ENCODE measurements at regions of chr20 and their contacts with region 1.

Region 1: DNA sequence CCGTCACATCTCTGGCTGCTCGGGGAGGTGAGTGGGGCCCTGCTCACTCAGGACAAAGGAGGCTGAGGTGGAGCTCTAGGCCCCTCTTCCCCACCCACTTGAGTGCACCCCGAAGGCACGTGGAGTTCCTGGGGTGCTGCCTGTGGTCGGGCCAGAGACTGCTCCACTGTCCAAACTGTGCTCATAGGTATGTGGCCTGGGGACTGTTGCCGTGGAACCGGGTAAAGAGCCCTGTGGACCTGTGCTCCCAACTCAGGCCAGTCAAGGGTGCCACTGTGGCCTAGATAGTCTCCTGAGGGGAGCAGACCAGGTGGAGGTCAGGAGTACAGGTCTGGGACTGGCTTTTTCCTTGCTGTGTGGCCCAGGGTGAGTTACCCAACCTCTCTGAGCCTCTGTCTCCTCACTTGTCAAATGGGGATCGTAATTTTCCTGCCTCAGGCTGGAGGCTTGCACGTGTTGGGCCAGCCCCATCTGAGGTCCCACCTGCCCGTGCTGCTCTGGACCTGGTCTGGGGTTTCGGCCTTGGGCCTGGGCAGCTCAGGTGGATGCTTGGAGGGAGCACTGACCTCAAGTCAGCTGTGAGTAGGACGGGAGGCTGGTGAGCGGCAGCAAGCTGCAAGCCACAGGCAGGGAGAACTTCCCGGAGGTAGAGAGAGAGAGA is 12.4 kb upstream of the NPBWR2 start:
- DNase-seq: no peak
- ATAC-seq: no peak
- H3K4me3 ChIP-seq: peak overlapping the region; percentile 49
- H3K4me3 Mint-ChIP-seq: peak overlapping the region; percentile 60
- H3K27ac ChIP-seq: no peak overlapping the region
- H3K27ac Mint-ChIP-seq: peak overlapping the region; percentile 59
- H3K4me1 ChIP-seq: peaks cover 13% of the 10 kb centered on the region
- H3K4me1 Mint-ChIP-seq: peaks cover 9% of the 10 kb centered on the region
- H3K27me3 ChIP-seq: peaks cover 7% of the 10 kb centered on the region in 2 experiments
- H3K27me3 Mint-ChIP-seq: peaks cover 12% of the 10 kb centered on the region
- CTCF ChIP-seq: no peak

Region 2: DNA sequence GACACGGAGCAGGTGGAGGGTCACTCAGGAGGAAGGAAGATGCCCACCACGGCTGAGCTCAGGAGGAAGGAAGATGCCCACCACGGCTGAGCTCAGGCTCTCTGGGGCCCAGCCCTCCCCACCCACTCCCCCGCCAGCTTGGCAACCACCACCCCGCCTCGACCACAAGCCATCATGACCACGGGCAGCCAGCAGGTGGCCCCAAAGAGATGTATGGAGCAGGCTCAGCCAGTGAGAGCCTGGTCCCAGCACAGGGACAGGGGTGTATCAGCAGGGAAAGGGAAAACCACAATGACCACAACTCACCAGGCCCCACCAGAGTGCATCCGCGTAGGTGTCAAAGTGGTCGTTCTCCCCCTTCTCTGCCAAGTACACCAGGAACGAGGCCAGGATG is 677.7 kb before region 1 on chr20:
- CTCF ChIA-PET with region 1: no interaction called
- POLR2A ChIA-PET with region 1: no interaction called
- intact Hi-C with region 1: no loop called
- DNase-seq: peak; percentile 29 to 76 (median 60)
- ATAC-seq: peak; percentile 86
- H3K4me3 ChIP-seq: no peak overlapping the region
- H3K4me3 Mint-ChIP-seq: no peak overlapping the region
- H3K27ac ChIP-seq: no peak overlapping the region
- H3K27ac Mint-ChIP-seq: no peak overlapping the region
- H3K4me1 ChIP-seq: peaks cover 18% of the 10 kb centered on the region
- H3K4me1 Mint-ChIP-seq: peaks cover 14% of the 10 kb centered on the region
- H3K27me3 ChIP-seq: peaks cover 0 to 6% of the 10 kb centered on the region in 2 experiments
- H3K27me3 Mint-ChIP-seq: peaks cover 2% of the 10 kb centered on the region
- CTCF ChIP-seq: peak; percentile 46

Region 3: GRCh38 chr20:63782051-63782471 is 337.8 kb before region 1 on chr20:
- CTCF ChIA-PET with region 1: no interaction called
- POLR2A ChIA-PET with region 1: no interaction called
- intact Hi-C with region 1: loop called in 1 of 2 experiments (anchors 10 kb)
- DNase-seq: peak in 13 of 14 experiments; percentile 16 to 88 (median 48)
- ATAC-seq: peak; percentile 93
- H3K4me3 ChIP-seq: peak overlapping the region; percentile 14
- H3K4me3 Mint-ChIP-seq: peak overlapping the region; percentile 43
- H3K27ac ChIP-seq: peak overlapping the region in 1 of 2 donors; percentile 22
- H3K27ac Mint-ChIP-seq: peak overlapping the region; percentile 67
- H3K4me1 ChIP-seq: peaks cover 23% of the 10 kb centered on the region
- H3K4me1 Mint-ChIP-seq: peaks cover 23% of the 10 kb centered on the region
- H3K27me3 ChIP-seq: no peaks in the 10 kb centered on the region
- H3K27me3 Mint-ChIP-seq: no peaks in the 10 kb centered on the region
- CTCF ChIP-seq: peak; percentile 51

Region 4: DNA sequence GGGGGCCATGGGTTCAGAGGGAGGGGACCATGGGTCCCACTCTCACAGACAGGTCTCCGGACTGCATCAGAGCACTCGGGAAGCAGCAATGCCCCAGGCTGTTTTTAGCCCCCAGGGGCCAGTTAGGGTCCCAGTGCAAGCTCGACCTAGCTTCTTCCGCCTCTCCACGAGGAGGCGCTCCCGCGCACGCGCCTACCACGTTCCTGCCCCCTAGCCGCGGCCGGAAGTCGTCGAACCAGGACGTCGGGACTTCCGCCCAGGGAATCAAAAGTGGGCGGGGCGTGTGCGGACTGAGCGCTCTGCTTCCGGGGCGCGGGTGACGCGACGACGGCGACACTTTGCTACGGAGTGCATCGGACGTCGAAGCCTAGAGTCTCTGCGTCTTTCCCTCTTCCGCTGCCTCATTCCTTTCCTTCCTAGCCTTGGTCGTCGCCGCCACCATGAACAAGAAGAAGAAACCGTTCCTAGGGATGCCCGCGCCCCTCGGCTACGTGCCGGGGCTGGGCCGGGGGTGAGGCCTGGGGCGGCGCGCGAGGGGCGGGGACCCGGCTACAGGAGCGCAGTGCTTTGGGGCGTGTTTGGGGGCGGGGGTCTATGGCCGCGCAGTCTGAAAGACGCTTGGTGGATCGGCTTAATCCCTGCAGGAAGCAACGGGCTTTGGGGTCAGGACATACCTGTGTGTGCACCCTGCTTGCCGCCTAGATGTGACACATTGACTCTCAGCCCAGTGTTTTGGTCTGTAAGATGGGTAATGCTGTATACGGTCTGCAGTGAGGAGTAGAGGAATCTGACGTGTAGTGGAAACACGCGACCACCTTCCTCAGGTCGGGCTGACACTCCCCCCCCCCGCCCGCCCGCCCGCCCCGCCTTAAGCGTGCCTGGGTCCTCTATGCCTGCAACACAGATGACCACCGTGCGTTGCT is 138.7 kb before region 1 on chr20 and contains the start of gene PRPF6:
- CTCF ChIA-PET with region 1: interaction called, 14 read pairs
- POLR2A ChIA-PET with region 1: no interaction called
- intact Hi-C with region 1: loop called (anchors 2 to 5 kb)
- DNase-seq: peak; percentile 89 to 98 (median 94)
- ATAC-seq: peak; percentile 58
- H3K4me3 ChIP-seq: peak within 1 kb of the TSS; percentile 69
- H3K4me3 Mint-ChIP-seq: peak within 1 kb of the TSS; percentile 90
- H3K27ac ChIP-seq: peak within 1 kb of the TSS; percentile 85 to 87
- H3K27ac Mint-ChIP-seq: peak within 1 kb of the TSS; percentile 98
- H3K4me1 ChIP-seq: peaks cover 60% of the 10 kb centered on the region
- H3K4me1 Mint-ChIP-seq: peaks cover 67% of the 10 kb centered on the region
- H3K27me3 ChIP-seq: no peaks in the 10 kb centered on the region
- H3K27me3 Mint-ChIP-seq: no peaks in the 10 kb centered on the region
- CTCF ChIP-seq: peak; percentile 93
- total RNA-seq, gene PRPF6: 50.6 to 51.3 TPM

Region 5: GRCh38 chr20:64079273-64080012 is 40.4 kb before region 1 on chr20 and contains the start of gene RGS19:
- CTCF ChIA-PET with region 1: interaction called, 25 read pairs
- POLR2A ChIA-PET with region 1: interaction called, 13 read pairs
- intact Hi-C with region 1: loop called (anchors 1 kb)
- DNase-seq: peak in 13 of 14 experiments; percentile 42 to 87 (median 68)
- ATAC-seq: peak; percentile 33
- H3K4me3 ChIP-seq: peak within 1 kb of the TSS; percentile 93
- H3K4me3 Mint-ChIP-seq: peak within 1 kb of the TSS; percentile 91
- H3K27ac ChIP-seq: peak within 1 kb of the TSS; percentile 61 to 80
- H3K27ac Mint-ChIP-seq: peak within 1 kb of the TSS; percentile 86
- H3K4me1 ChIP-seq: peaks cover 63% of the 10 kb centered on the region
- H3K4me1 Mint-ChIP-seq: peaks cover 46% of the 10 kb centered on the region
- H3K27me3 ChIP-seq: no peaks in the 10 kb centered on the region
- H3K27me3 Mint-ChIP-seq: no peaks in the 10 kb centered on the region
- CTCF ChIP-seq: no peak
- total RNA-seq, gene RGS19: 9.7 to 14.8 TPM